ENCODE measurements at regions of chr6 and their contacts with region 1.

Region 1: DNA sequence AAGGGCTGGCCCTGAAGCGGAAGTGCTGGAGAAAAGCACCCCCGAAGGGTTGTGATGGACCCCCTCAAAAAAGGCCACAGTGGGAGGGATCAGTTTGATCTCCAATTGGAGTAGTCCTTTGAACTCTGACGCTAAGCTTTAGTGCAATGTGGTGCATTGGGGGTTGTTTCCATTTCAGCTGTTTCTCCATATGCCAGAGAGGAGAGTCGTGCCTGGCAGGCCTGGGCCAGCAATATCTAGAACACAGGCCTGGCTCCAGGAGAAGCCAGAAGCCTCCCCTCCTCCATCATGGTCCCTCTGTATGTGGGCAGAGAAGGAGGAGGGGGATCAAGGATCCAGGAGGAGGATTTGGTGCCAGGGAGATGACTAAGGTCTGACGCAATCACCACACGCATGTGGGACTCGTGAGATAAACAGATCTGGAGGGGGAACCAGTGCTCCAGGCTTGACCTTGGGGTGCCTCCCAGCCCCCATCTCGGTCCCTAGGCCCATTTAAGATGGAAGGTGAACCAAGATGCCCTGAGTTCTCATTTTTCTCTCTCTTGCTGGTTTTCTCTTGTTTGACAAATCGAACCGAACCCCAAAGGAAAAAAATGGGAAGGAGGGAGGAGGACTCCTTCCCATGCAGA is 517.4 kb upstream of the JARID2 start:
- H3K4me3 Mint-ChIP-seq: no peak overlapping the region
- H3K27ac Mint-ChIP-seq: peak overlapping the region; percentile 83
- H3K4me1 Mint-ChIP-seq: peaks cover 62% of the 10 kb centered on the region
- H3K27me3 Mint-ChIP-seq: peaks cover 2% of the 10 kb centered on the region

Region 2: DNA sequence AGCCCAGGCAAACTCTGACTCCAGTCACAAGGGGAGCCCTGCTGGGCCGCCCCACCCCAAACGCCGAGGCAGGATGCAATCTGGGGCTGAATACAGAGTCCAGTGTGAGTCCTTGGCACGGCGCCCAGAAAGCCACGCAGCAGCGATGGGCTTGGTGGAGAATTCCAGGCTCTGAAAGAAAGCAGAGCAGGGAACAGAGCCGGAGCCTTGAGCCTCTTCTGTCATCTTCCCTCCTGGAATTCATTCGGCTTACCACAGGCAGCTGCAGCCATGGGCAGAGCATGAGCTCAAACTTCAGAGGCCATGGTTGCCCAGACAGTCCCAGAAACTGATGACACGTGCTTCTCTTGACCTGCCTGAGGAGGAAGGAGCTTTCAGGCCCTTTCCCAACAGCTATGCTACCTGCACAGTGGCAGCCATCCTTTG is 76.3 kb after region 1 on chr6:
- intact Hi-C with region 1: no loop called
- H3K4me3 Mint-ChIP-seq: no peak overlapping the region
- H3K27ac Mint-ChIP-seq: no peak overlapping the region
- H3K4me1 Mint-ChIP-seq: peaks cover 22% of the 10 kb centered on the region
- H3K27me3 Mint-ChIP-seq: peaks cover 5% of the 10 kb centered on the region

Region 3: DNA sequence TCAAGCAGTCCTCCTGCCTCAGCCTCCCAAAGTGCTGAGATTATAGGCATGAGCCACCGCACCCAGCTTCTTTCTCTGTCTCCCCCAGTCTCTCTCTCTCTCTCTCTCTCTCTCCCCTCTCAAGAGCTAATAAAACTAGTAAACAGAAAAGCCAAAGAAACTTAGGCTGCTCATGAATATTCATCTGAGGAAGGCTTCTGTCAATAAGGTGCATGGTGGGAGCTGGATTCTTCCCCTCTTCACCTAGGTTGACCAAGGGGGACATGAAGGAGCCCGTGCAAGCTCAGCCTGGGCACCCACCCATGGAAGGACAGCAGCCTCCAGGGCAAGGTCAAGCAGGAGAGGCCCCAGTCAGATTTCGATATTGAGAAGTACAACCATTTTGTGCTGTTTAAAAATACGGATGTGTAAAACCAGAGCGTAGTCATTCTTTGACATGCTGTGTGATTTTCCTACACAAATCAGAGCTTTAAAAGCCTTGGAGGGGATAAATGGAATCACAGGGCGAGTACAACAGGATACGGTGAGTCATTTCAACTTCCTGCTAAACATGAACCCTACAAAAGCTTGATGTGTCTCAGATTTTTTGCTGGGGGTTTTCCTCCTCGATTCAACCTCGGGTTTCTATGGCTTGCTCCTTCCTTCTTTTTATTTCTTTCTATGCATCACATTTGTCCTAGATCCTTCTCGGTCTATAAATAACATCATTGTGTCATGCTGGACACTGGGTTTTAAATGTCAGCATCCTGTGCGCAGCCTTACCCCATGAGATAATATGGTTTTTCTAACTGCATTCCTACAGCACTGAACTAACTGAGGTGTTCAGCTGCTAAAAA is 148.5 kb after region 1 on chr6:
- intact Hi-C with region 1: loop called (anchors 5 kb)
- H3K4me3 Mint-ChIP-seq: peak overlapping the region; percentile 57
- H3K27ac Mint-ChIP-seq: peak overlapping the region; percentile 97
- H3K4me1 Mint-ChIP-seq: peaks cover 85% of the 10 kb centered on the region
- H3K27me3 Mint-ChIP-seq: no peaks in the 10 kb centered on the region

Region 4: DNA sequence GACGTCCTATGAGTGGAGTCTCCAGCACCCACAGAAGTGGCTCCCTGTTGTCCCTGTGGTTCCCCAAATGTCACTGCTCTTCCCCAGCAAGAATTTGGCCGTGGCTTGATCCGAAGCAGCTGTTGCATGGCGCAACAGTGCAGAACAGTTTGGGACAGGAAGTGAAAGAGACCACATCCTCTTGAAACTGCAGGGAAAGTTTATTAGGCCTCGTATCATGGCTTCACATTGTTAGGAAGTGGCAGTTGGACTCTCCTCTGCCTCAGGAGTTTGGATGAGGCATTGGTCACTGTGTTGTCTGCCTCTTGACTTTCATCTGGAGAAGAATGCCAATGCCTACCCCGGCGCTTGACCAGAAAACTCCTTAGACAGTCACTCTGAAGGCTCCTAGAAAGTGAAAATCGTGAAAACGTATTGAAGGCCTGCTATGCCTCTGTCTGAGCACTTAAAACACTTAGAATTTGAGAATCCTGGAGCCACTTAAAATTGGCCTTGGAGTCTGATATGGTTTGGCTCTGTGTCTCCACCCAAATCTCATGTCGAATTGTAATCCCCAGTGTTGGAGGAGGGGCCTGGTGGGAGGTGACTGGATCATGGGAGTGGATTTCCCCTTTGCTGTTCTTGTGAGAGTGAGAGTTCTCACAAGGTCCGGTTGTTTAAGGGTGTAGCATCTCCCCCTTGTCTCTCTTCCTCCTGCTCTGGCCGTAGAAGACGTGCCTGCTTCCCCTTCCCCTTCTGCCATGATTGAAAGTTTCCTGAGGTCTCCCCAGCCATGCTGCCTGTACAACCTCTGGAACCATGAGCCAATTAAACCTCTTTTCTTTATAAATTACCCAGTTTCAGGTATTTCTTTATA is 182.4 kb after region 1 on chr6:
- intact Hi-C with region 1: loop called (anchors 10 kb)
- H3K4me3 Mint-ChIP-seq: no peak overlapping the region
- H3K27ac Mint-ChIP-seq: peak overlapping the region; percentile 85
- H3K4me1 Mint-ChIP-seq: peaks cover 38% of the 10 kb centered on the region
- H3K27me3 Mint-ChIP-seq: peaks cover 3% of the 10 kb centered on the region

Measured in dendritic cell treated with granulocyte-macrophage colony-stimulating factor and Interleukin-4, amounts not matched to agents 40 ng/mL and 50 ng/mL, for 4 days (primary cell).